AG04450 (cell line): ENCODE measurements at regions of chr19 and their contacts with region 1.

Region 1: GRCh38 chr19:4139614-4140236 is 13.7 kb upstream of the CREB3L3 start:
- DNase-seq: no peak
- H3K4me3 ChIP-seq: no peak overlapping the region
- H3K27ac ChIP-seq: no peak overlapping the region
- H3K27me3 ChIP-seq: no peaks in the 10 kb centered on the region
- CTCF ChIP-seq: peak; percentile 72

Region 2: GRCh38 chr19:2724148-2724557 is 1415.6 kb before region 1 on chr19:
- CTCF ChIA-PET with region 1: no interaction called
- POLR2A ChIA-PET with region 1: interaction called, 12 read pairs
- DNase-seq: no peak
- H3K4me3 ChIP-seq: no peak overlapping the region
- H3K27ac ChIP-seq: no peak overlapping the region
- H3K27me3 ChIP-seq: no peaks in the 10 kb centered on the region
- CTCF ChIP-seq: no peak; the same call in 1 of the 2 replicates

Region 3: GRCh38 chr19:3899531-3900292 is 240.0 kb before region 1 on chr19:
- CTCF ChIA-PET with region 1: no interaction called
- POLR2A ChIA-PET with region 1: no interaction called
- DNase-seq: no peak
- H3K4me3 ChIP-seq: no peak overlapping the region
- H3K27ac ChIP-seq: no peak overlapping the region
- H3K27me3 ChIP-seq: peaks cover 2% of the 10 kb centered on the region
- CTCF ChIP-seq: no peak

Region 4: DNA sequence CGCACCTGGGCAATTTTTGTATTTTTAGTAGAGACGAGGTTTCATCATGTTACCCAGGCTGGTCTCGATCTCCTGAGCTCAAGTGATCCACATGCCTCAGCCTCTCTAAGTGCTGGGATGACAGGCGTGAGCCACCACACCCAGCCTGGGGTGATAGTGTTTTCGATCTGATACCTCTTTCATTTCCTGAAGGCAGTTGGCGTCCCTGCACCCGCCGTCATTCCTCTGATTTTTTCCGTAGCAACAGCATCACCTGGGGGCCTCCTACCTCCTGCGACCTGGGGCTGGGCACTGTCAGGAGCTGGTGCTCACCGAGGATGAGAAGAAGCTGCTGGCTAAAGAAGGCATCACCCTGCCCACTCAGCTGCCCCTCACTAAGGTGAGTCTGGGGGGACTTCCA is 24.5 kb after region 1 on chr19:
- CTCF ChIA-PET with region 1: interaction called, 12 read pairs
- POLR2A ChIA-PET with region 1: no interaction called
- DNase-seq: no peak
- H3K4me3 ChIP-seq: no peak overlapping the region
- H3K27ac ChIP-seq: no peak overlapping the region
- H3K27me3 ChIP-seq: peaks cover 7% of the 10 kb centered on the region
- CTCF ChIP-seq: no peak